ENCODE measurements at regions of chr17 and their contacts with region 1.

Region 1: DNA sequence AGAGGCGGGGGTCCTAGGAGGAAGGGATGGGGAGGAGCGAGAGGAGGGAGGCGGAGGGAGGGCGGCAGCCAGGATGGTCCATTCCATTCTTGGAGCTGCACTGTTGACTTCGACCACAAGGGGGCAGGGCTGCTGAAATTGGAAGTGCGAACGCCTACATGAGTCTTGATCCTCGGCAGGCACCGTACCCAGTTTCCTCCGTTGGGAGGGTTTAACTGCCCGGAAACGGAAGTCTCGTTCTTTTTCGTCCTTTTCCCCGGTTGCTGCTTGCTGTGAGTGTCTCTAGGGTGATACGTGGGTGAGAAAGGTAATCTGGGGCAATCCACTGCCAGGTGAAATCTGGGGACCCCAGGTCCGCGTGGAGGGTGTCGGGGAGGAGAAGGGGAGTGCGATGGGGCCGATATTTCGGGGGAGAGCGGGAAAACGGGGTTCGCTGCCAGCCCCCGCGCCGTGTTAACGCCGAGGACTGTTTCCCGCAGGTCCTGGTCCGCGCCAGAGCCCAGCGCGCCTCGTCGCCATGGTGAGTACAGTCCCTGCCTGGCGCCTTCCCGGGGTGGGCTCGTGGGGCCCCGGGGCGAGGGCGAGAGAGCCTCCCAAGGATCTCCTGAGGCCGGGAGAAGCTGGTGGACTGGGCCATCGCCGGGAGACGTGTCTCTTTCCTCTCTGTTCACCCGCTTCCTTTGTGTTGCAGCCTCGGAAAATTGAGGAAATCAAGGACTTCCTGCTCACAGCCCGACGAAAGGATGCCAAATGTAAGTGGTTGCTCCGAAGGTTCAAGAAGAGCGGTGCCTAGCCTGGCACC is at the start of gene RPL38:
- DNase-seq: peak; percentile 98
- ATAC-seq: peak; percentile 80
- H3K4me3 Mint-ChIP-seq: peak within 1 kb of the TSS; percentile 100
- H3K27ac Mint-ChIP-seq: peak within 1 kb of the TSS; percentile 99
- H3K4me1 Mint-ChIP-seq: peaks cover 40% of the 10 kb centered on the region
- H3K27me3 Mint-ChIP-seq: peaks cover 24% of the 10 kb centered on the region
- CTCF ChIP-seq: peak; percentile 91
- total RNA-seq, gene RPL38: 1,170 to 1,273 TPM (median 1,266 TPM) in 3 replicates

Region 2: GRCh38 chr17:74010903-74011302 is 192.7 kb before region 1 on chr17:
- CTCF ChIA-PET with region 1: interaction called, 10 read pairs
- POLR2A ChIA-PET with region 1: no interaction called
- DNase-seq: no peak
- ATAC-seq: no peak
- H3K4me3 Mint-ChIP-seq: no peak overlapping the region
- H3K27ac Mint-ChIP-seq: no peak overlapping the region
- H3K4me1 Mint-ChIP-seq: peaks cover 23% of the 10 kb centered on the region
- H3K27me3 Mint-ChIP-seq: no peaks in the 10 kb centered on the region; the same call in none of the 2 replicates
- CTCF ChIP-seq: no peak

Region 3: GRCh38 chr17:74110467-74110866 is 93.2 kb before region 1 on chr17:
- CTCF ChIA-PET with region 1: interaction called, 59 read pairs
- POLR2A ChIA-PET with region 1: no interaction called
- DNase-seq: no peak
- ATAC-seq: no peak
- H3K4me3 Mint-ChIP-seq: no peak overlapping the region
- H3K27ac Mint-ChIP-seq: no peak overlapping the region
- H3K4me1 Mint-ChIP-seq: peaks cover 32% of the 10 kb centered on the region
- H3K27me3 Mint-ChIP-seq: peaks cover 8% of the 10 kb centered on the region; the same call in 1 of the 2 replicates
- CTCF ChIP-seq: no peak

Region 4: GRCh38 chr17:74176546-74177001 is 27.1 kb before region 1 on chr17:
- CTCF ChIA-PET with region 1: interaction called, 48 read pairs
- POLR2A ChIA-PET with region 1: no interaction called
- DNase-seq: peak; percentile 81
- ATAC-seq: peak; percentile 89
- H3K4me3 Mint-ChIP-seq: no peak overlapping the region
- H3K27ac Mint-ChIP-seq: no peak overlapping the region
- H3K4me1 Mint-ChIP-seq: peaks cover 9% of the 10 kb centered on the region; the same call in 1 of the 2 replicates
- H3K27me3 Mint-ChIP-seq: peaks cover 4% of the 10 kb centered on the region
- CTCF ChIP-seq: peak; percentile 81

Region 5: DNA sequence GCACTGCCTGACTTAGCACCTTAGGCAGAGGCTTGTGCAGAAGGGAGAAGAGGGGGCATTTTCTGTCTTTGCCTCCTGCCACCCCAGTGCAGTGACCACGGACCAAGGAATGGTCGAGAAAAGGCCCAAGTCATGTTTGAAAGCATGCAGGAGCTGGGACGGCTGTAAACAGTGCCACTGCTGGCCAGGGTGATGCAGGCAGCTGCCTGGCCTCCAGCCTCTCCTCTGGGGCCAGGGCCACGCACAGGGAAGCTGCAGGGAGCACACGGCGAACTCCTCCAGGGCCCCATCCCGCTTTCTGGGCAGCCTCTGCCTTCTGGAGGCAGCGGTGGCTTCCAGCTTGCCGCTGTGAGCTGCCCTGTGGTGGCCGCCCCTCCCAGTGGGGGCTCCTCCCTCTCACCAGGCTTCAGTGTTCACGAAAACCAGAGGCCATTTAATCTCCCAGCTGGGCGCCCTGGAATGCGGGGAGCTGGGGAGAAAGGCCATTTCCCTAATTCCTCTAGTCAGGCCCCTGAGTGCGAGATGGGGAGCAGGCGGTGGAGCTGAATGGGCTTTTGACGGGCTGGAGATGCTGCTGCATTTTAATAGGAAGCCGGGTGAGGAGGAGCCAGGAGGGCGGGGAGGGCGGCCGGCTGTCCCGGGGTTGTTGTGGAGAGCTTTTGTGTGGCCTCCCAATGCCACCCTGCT is 41.6 kb after region 1 on chr17:
- CTCF ChIA-PET with region 1: interaction called, 15 read pairs
- POLR2A ChIA-PET with region 1: no interaction called
- DNase-seq: peak; percentile 69
- ATAC-seq: peak; percentile 77
- H3K4me3 Mint-ChIP-seq: peak overlapping the region; percentile 40; the same call in 1 of the 2 replicates
- H3K27ac Mint-ChIP-seq: no peak overlapping the region
- H3K4me1 Mint-ChIP-seq: peaks cover 19% of the 10 kb centered on the region
- H3K27me3 Mint-ChIP-seq: peaks cover 7% of the 10 kb centered on the region
- CTCF ChIP-seq: no peak

Region 6: GRCh38 chr17:74354123-74354522 is 150.5 kb after region 1 on chr17:
- CTCF ChIA-PET with region 1: interaction called, 12 read pairs
- POLR2A ChIA-PET with region 1: no interaction called
- DNase-seq: peak; percentile 88
- ATAC-seq: peak; percentile 67
- H3K4me3 Mint-ChIP-seq: no peak overlapping the region
- H3K27ac Mint-ChIP-seq: no peak overlapping the region
- H3K4me1 Mint-ChIP-seq: peaks cover 10% of the 10 kb centered on the region
- H3K27me3 Mint-ChIP-seq: peaks cover 85% of the 10 kb centered on the region
- CTCF ChIP-seq: peak; percentile 65